ENCODE measurements at regions of chr2 and their contacts with region 1.

Region 1: GRCh38 chr2:218070587-218070986 is 1.5 kb downstream of the RUFY4 start:
- DNase-seq: no peak
- H3K4me3 ChIP-seq: no peak overlapping the region
- H3K27ac ChIP-seq: no peak overlapping the region
- H3K4me1 ChIP-seq: no peaks in the 10 kb centered on the region
- H3K27me3 ChIP-seq: no peaks in the 10 kb centered on the region
- CTCF ChIP-seq: no peak
- POLR2A ChIP-seq: no peak

Region 2: GRCh38 chr2:218033590-218034496 is 36.7 kb before region 1 on chr2:
- intact Hi-C with region 1: no loop called
- DNase-seq: no peak
- H3K4me3 ChIP-seq: no peak overlapping the region
- H3K27ac ChIP-seq: no peak overlapping the region
- H3K4me1 ChIP-seq: peaks cover 0 to 27% of the 10 kb centered on the region in 2 donors
- H3K27me3 ChIP-seq: no peaks in the 10 kb centered on the region
- CTCF ChIP-seq: no peak
- POLR2A ChIP-seq: no peak

Region 3: GRCh38 chr2:218123986-218124385 is 53.4 kb after region 1 on chr2:
- intact Hi-C with region 1: loop called (anchors 2 kb)
- DNase-seq: no peak
- H3K4me3 ChIP-seq: no peak overlapping the region
- H3K27ac ChIP-seq: no peak overlapping the region
- H3K4me1 ChIP-seq: no peaks in the 10 kb centered on the region
- H3K27me3 ChIP-seq: no peaks in the 10 kb centered on the region
- CTCF ChIP-seq: no peak
- POLR2A ChIP-seq: no peak